Right cardiac atrium (tissue), 5 donors: ENCODE measurements at regions of chr12 and their contacts with region 1.

Region 1: GRCh38 chr12:100200463-100201181 is at the start of gene ACTR6:
- DNase-seq: peak; percentile 95 to 99 (median 97)
- ATAC-seq: peak; percentile 98 to 99
- H3K4me3 ChIP-seq: peak within 1 kb of the TSS; percentile 100
- H3K27ac ChIP-seq: peak within 1 kb of the TSS; percentile 92
- H3K4me1 ChIP-seq: no peaks in the 10 kb centered on the region
- H3K27me3 ChIP-seq: no peaks in the 10 kb centered on the region
- total RNA-seq, gene ACTR6: 19.0 to 29.9 (median 23.6) TPM

Region 2: DNA sequence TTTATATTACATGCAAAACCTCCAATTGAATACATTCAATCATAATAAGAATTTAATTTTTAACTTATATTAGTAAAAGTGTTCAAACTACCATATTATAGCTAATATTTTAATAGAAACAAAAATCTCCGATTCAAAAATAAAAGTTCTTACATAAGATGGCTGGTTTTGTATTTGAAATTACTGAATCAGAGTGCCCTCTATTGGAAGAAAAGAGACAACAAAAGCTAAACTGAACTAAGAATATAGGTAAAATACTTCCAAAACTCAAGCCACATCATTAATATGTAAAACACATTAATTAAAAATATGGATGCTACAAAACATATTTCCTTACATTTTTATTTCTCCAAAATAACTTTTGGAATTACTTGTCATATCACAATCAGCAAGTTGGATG is 432.8 kb before region 1 on chr12:
- intact Hi-C with region 1: no loop called
- DNase-seq: no peak
- ATAC-seq: no peak
- H3K4me3 ChIP-seq: no peak overlapping the region
- H3K27ac ChIP-seq: no peak overlapping the region
- H3K4me1 ChIP-seq: no peaks in the 10 kb centered on the region
- H3K27me3 ChIP-seq: no peaks in the 10 kb centered on the region

Region 3: DNA sequence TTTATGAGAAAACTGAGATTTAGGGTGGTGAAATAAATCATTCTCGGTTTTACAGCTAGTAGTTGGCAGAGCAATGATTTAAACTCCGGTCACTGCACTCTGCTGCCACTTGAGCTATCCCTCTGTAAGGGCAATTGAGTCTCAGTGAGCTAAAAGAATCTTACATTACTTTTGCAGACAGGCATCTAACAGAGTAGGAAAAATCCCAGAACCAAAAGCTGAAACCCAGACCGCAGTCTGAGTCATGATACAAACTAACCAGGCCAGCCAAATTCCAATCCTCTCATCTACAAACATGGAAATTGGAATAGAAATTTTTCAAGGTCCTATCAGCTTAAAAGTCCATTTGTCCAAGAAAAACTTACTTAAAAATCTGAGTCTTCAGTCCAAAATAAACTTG is 289.5 kb before region 1 on chr12:
- intact Hi-C with region 1: no loop called
- DNase-seq: peak in 2 of 3 donors; percentile 12 to 38
- ATAC-seq: peak; percentile 87 to 93
- H3K4me3 ChIP-seq: no peak overlapping the region
- H3K27ac ChIP-seq: no peak overlapping the region
- H3K4me1 ChIP-seq: no peaks in the 10 kb centered on the region
- H3K27me3 ChIP-seq: no peaks in the 10 kb centered on the region

Region 4: DNA sequence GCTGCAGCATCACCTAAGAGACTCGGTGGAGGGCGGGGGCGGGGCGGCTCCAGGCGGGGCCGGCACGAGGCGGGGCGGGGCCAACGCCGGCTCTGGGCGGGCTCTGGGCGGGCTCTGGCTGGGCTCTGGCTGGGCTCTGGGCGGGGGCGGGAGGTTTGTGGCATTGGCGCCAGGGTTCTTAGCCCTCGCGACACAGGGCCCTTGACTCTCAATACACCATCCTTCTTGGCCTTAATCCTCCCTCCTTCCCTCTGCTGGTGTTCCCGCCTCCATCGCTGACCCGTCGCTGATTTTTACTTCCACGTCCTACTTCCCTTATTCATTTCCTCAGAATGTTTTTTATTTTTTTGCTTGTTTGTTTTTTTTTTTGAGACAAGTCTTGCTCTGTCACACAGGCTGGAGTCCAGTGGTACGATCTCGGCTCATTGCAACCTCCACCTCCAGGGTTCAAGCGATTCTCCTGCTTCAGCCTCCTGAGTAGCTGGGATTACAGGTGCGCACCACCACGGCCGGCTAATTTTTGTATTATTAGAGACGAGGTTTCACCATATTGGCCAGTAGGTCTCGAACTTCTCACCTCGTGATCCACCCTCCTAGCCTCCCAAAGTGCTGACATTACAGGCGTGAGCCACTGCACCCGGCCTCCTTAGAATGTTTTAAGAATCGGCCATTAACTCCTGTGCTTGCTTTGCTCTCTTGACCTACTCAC is 57.6 kb before region 1 on chr12 and contains the start of gene BLTP3B:
- intact Hi-C with region 1: loop called in 1 of 4 experiments (anchors 5 kb)
- DNase-seq: peak; percentile 93 to 98 (median 97)
- ATAC-seq: peak; percentile 99 to 100
- H3K4me3 ChIP-seq: peak within 1 kb of the TSS; percentile 95
- H3K27ac ChIP-seq: peak within 1 kb of the TSS; percentile 97
- H3K4me1 ChIP-seq: peaks cover 2% of the 10 kb centered on the region
- H3K27me3 ChIP-seq: no peaks in the 10 kb centered on the region
- total RNA-seq, gene BLTP3B: 13.8 to 20.1 (median 15.9) TPM

Region 5: DNA sequence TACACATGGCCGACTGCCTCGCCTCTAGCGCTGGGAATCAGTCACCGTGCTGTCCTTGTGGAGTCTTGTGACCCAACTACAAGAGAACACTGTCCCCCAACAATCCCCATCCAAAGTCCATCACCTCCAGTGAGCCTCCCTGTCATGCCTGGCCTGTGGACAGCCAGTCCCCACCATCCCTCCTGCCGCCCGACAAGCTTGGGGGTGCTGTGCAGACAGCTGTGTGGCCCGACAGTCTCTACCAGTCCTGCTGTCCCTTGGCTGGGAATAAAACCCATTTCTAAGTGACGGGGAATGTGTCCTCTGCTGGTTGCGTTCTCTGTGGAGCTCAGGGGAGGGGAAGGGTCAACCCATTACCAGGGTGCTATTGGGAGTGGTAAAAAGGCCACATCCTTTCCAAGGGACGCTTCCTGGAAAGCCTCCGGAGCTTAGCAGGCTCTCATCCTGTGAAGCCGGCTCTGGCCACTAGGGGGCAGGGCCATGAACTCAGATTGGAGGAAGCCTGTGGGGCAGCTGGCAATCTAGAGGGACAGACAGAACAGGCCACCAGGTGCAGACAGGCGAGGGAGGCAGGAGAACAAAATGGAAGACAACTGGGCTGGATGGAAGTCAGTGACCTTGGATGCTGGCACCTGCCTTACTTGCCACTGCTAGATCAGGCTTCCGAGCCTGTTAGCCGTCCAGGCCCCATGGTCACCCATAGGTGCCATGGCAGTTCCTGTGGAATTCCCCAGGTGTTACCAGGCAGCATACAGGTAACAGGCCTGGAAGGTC is 46.0 kb before region 1 on chr12:
- intact Hi-C with region 1: loop called in 1 of 4 experiments (anchors 5 kb)
- DNase-seq: peak; percentile 77 to 90 (median 89)
- ATAC-seq: peak; percentile 44 to 70
- H3K4me3 ChIP-seq: no peak overlapping the region
- H3K27ac ChIP-seq: no peak overlapping the region
- H3K4me1 ChIP-seq: no peaks in the 10 kb centered on the region
- H3K27me3 ChIP-seq: no peaks in the 10 kb centered on the region

Region 6: DNA sequence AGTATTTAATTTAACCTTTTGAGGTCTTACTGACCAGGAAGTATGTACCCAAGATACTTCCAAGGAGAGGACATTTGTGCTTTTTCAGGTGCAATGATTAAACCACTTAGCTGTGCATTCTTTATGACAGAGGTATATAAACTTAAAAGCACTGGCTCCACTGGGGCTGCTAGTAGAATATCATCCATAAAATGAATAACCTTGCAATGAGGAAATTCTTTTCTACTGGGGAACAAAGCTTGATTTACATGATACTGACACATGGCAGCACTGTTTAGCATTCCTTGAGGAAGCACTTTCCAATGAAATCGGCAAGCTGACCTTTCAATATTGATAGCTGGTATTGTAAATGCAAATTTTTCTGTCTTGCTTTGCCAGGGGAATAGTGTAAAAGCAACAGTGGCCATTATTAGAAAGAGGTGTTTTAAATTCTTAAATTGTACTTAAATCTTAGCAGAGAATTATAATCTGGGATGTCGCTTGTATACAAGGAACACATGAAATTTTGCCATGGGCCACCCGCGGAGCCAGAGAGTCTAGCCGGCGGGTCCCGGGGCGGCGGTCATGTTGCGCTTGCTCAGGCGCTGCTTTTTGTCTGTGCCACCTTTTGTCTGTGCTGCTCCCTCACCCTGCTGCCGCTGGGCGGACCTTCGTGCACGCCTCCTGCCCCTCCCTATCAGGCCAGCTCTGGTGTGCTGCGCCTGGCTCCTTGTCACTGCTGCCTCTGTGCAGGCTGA is 37.0 kb before region 1 on chr12:
- intact Hi-C with region 1: loop called in 2 of 4 experiments (anchors 5 kb)
- DNase-seq: peak; percentile 85 to 93 (median 92)
- ATAC-seq: peak; percentile 99
- H3K4me3 ChIP-seq: peak overlapping the region; percentile 35
- H3K27ac ChIP-seq: no peak overlapping the region
- H3K4me1 ChIP-seq: peaks cover 3% of the 10 kb centered on the region
- H3K27me3 ChIP-seq: no peaks in the 10 kb centered on the region